ENCODE measurements at regions of chr5 and their contacts with region 1.

Region 1: DNA sequence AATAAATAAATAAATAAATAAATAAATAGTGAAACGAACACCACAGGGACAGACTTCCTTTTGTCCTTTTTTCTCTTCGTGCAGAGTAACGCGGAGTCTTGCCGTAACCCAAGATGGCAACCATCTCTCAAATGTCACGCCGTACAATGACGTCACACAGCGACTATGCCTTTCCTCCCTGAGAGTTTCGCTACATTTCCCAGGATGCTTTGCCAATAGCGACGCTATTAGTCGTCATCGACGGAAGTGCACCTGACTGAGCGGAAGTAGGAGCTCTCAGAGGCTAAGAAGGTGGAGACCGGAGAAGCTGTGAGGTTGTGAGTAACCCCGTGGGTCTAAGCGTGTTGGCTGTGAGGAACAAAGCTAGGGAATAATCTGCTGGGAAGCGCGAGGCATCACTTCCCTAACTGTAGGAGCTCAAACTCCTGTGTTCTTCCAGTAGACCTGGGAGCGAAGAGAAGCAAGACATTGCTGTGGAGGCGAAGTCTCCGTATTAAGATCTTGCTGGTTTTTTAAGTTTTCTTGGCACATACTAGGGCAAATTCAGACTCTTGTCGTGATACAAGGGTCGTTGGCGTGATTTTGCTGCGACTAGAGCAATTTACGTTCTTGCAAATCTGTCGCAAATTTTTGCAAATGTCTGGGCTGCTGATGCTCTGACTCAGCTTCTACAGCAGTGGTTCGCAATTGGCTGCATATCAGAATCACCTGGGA is at the start of gene TTC1:
- DNase-seq: peak; percentile 98
- H3K4me3 ChIP-seq: peak within 1 kb of the TSS; percentile 81
- H3K27ac ChIP-seq: peak within 1 kb of the TSS; percentile 88
- H3K27me3 ChIP-seq: no peaks in the 10 kb centered on the region
- CTCF ChIP-seq: no peak
- polyA plus RNA-seq, gene TTC1: 44.5 and 53.7 TPM in 2 replicates

Region 2: GRCh38 chr5:159515909-159516415 is 493.1 kb before region 1 on chr5:
- CTCF ChIA-PET with region 1: no interaction called
- POLR2A ChIA-PET with region 1: interaction called, 11 read pairs
- DNase-seq: no peak
- H3K4me3 ChIP-seq: no peak overlapping the region
- H3K27ac ChIP-seq: no peak overlapping the region
- H3K27me3 ChIP-seq: no peaks in the 10 kb centered on the region
- CTCF ChIP-seq: peak; percentile 76

Region 3: DNA sequence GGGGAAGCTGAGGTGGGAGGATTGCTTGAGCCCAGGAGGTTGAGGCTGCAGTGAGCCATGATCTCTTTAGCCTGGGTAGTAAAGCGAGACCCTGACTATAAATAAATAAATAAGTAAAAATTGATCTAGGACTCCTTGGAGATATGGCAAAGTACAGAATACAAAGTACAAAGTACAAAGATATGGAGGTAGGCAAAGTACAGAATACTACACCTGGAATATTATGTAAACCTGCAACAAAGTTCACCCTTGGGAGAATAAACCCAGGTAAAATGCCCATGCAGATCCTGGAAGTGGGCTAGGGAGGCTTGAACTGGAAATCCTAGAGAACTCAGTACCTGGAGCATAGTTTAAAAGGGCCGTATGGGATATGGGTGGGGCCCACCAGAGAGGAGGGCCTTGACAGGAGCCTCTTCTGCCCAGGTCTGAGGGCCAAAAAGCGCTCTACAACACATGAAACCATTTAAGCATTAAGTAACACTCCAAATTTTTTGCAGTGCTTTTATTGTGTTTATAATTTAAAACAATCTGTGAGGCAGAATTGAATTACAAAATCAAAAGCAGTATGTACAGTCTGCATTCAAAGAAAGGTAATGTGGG is 20.6 kb after region 1 on chr5:
- CTCF ChIA-PET with region 1: no interaction called
- POLR2A ChIA-PET with region 1: no interaction called
- DNase-seq: no peak
- H3K4me3 ChIP-seq: no peak overlapping the region
- H3K27ac ChIP-seq: no peak overlapping the region
- H3K27me3 ChIP-seq: no peaks in the 10 kb centered on the region
- CTCF ChIP-seq: no peak